A673 (cell line): ENCODE measurements at regions of chr13 and their contacts with region 1.

Region 1: DNA sequence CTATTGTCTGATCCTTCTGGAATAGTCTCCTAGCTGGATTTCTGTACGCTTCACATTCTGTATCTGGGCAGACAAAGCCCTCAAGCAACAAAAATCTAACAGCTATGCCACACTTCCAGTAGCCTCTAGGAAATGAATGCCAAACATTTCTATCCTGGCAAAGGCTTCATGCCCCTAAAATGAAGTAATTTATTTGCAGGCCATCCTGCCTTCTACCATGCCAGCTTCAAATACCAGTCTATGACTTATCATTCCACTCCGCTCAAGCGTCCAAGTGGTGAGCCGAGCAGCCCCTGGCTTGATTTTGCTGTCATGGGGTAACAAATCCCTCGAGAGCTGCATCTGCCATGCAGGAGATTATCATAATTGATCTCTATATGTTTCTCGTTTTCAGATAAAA is 86.9 kb downstream of the LHFPL6 start:
- DNase-seq: no peak
- H3K4me3 ChIP-seq: no peak overlapping the region
- H3K27ac ChIP-seq: no peak overlapping the region
- H3K4me1 ChIP-seq: peaks cover 23% of the 10 kb centered on the region
- H3K27me3 ChIP-seq: no peaks in the 10 kb centered on the region
- CTCF ChIP-seq: no peak

Region 2: GRCh38 chr13:39159393-39159792 is 356.7 kb before region 1 on chr13:
- CTCF ChIA-PET with region 1: no interaction called
- POLR2A ChIA-PET with region 1: interaction called, 12 read pairs
- intact Hi-C with region 1: no loop called
- DNase-seq: peak; percentile 71
- H3K4me3 ChIP-seq: no peak overlapping the region
- H3K27ac ChIP-seq: no peak overlapping the region
- H3K4me1 ChIP-seq: peaks cover 15% of the 10 kb centered on the region
- H3K27me3 ChIP-seq: no peaks in the 10 kb centered on the region
- CTCF ChIP-seq: no peak

Region 3: DNA sequence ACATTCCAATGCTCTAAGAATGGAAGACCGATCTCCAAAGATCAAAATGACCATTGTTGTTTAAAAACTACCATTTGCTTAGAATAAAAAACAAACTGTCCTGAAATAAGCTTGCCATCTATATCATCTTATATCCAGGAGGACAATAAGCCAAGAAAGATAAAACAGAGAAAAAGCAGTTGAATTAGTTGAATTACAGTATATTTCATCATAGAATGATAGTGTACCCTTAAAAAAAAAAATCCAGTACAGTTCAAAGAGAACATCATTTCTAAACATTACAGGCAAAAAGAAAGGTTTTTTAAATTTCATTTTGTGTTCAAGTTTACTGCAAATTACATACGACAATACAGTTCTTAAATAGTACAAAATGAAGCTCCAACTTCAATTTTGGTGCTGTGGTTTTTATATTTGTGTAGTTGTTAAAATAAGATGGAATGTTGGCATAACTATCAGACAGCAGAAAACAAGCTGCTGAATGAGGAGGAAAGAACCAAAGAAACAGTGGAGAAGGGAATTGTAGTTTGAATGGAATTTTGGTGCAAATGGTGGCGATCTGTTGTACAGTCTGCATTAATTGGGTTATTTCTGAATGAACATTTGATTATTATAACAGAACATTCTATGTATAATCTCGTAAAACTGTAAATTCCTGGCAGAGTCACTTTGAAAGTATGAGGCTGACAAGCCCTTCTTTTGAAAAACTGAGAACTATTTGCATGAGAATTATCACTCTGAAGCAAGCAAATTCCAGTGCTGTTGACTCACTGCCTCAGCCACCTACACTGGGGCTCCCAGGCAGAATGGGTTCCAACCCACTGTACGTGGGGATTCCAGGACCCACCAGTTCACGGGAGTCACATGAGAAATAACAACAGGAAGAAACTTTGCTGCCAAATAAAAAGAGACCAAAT is 49.2 kb after region 1 on chr13:
- CTCF ChIA-PET with region 1: no interaction called
- POLR2A ChIA-PET with region 1: no interaction called
- intact Hi-C with region 1: no loop called
- DNase-seq: peak; percentile 82
- H3K4me3 ChIP-seq: peak overlapping the region; percentile 15
- H3K27ac ChIP-seq: peak overlapping the region; percentile 77
- H3K4me1 ChIP-seq: peaks cover 43% of the 10 kb centered on the region
- H3K27me3 ChIP-seq: no peaks in the 10 kb centered on the region
- CTCF ChIP-seq: no peak

Region 4: GRCh38 chr13:39655569-39656324 is 139.7 kb after region 1 on chr13 and contains the start of gene COG6:
- CTCF ChIA-PET with region 1: no interaction called
- POLR2A ChIA-PET with region 1: no interaction called
- intact Hi-C with region 1: no loop called
- DNase-seq: peak; percentile 92
- H3K4me3 ChIP-seq: peak within 1 kb of the TSS; percentile 89
- H3K27ac ChIP-seq: peak within 1 kb of the TSS; percentile 69
- H3K4me1 ChIP-seq: peaks cover 3% of the 10 kb centered on the region
- H3K27me3 ChIP-seq: no peaks in the 10 kb centered on the region
- CTCF ChIP-seq: no peak; the same call in 1 of the 2 replicates
- total RNA-seq, gene COG6: 33.6 and 41.9 TPM in 2 replicates